ENCODE measurements at regions of chr17 and their contacts with region 1.

Region 1: GRCh38 chr17:32192379-32192778 is 50.1 kb downstream of the RHOT1 start:
- DNase-seq: no peak
- H3K4me3 ChIP-seq: no peak overlapping the region
- H3K27me3 ChIP-seq: no peaks in the 10 kb centered on the region
- CTCF ChIP-seq: no peak

Region 2: GRCh38 chr17:32206861-32207260 is 14.5 kb after region 1 on chr17:
- CTCF ChIA-PET with region 1: no interaction called
- POLR2A ChIA-PET with region 1: interaction called, 12 read pairs
- DNase-seq: no peak
- H3K4me3 ChIP-seq: no peak overlapping the region
- H3K27me3 ChIP-seq: no peaks in the 10 kb centered on the region
- CTCF ChIP-seq: no peak

Region 3: DNA sequence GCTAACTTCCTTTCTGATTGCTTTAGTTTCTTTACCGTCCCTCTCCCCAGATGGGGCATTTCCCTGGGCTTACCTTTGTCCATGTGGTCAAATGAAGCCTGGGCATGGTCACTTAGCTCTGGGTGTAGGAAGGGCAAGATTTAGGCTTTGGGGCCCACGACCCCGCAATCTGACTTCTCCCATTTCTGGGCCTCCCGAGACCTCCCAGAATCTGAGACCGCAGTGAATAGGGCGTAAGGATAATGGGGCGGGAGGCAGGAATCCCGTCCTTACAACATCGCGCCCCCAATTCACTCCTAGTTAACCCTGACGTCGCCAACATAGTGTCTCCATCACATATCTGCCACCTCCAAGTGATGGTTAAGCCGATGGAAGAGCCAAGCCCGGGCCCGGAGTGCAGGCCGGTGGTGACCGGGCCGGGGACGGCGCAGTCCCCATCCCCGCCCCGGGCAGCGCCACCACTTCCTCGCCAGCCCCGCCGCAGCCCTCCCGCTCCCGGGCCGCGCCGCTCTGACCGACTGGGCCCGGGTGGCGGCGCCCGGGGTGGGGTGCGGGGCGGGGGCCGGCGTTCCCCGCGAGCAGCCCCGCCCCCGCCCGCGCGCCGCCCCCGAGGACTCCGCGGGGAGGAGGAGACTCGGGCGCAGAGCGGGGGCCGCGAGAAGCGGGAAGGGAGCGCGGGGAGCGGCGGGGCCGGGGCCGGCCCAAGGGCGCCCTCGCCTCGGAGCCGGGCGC is 73.0 kb after region 1 on chr17 and contains the start of gene RHBDL3:
- CTCF ChIA-PET with region 1: no interaction called
- POLR2A ChIA-PET with region 1: no interaction called
- DNase-seq: no peak
- H3K4me3 ChIP-seq: peak within 1 kb of the TSS; percentile 25
- H3K27me3 ChIP-seq: peaks cover 52% of the 10 kb centered on the region
- CTCF ChIP-seq: no peak
- polyA plus RNA-seq, gene RHBDL3: 0.01 and 0.04 TPM in 2 replicates